Activated T-helper 1 cell treated with anti-CD3 and anti-CD28 coated beads, Interleukin-12 subunit alpha, Interleukin-12 subunit beta, Interleukin-2, Interleukin-4 antibody, amounts not matched to agents 30 ng/mL and 10 ng/mL and 1 ng/mL, durations not matched to agents 14 hours and 24 hours and 36 hours (primary cell): ENCODE measurements at regions of chr1 and their contacts with region 1.

Region 1: GRCh38 chr1:22075718-22076117 is 23.2 kb downstream of the CDC42 start:
- DNase-seq: no peak
- H3K4me3 Mint-ChIP-seq: no peak overlapping the region
- H3K27ac Mint-ChIP-seq: peak overlapping the region; percentile 54
- H3K4me1 Mint-ChIP-seq: peaks cover 63% of the 10 kb centered on the region
- H3K27me3 Mint-ChIP-seq: no peaks in the 10 kb centered on the region

Region 2: DNA sequence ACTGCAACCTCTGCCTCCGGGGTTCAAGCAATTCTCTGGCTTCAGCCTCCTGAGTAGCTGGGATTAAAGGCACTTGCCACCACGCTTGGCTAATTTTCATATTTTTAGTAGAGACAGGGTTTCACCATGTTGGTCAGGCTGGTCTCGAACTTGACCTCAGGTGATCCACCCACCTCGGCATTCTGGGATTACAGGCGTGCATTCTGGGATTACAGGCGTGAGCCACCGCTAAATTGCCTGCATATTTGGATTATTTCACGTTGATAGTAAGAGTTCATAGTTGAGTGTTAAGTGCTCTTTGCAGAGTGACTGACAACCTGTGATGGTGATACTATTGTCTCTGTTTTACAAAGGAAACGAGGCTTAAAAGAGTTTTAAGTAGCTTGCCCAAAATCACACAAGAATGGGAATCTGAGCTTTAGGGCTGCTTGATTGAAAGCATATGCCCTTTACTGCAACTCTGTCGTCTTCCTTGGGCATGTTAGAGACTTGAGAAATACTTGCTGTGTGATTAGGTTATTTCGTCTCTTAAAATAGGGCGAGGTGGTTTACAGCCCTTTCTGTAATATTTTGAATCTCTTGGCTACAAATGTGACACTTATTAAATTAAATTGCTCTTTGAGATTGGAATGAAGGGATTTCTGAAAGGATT is 10.8 kb before region 1 on chr1:
- intact Hi-C with region 1: loop called (anchors 2 kb)
- DNase-seq: no peak
- H3K4me3 Mint-ChIP-seq: no peak overlapping the region
- H3K27ac Mint-ChIP-seq: no peak overlapping the region
- H3K4me1 Mint-ChIP-seq: peaks cover 72% of the 10 kb centered on the region
- H3K27me3 Mint-ChIP-seq: no peaks in the 10 kb centered on the region